ENCODE measurements at regions of chr19 and their contacts with region 1.

Region 1: DNA sequence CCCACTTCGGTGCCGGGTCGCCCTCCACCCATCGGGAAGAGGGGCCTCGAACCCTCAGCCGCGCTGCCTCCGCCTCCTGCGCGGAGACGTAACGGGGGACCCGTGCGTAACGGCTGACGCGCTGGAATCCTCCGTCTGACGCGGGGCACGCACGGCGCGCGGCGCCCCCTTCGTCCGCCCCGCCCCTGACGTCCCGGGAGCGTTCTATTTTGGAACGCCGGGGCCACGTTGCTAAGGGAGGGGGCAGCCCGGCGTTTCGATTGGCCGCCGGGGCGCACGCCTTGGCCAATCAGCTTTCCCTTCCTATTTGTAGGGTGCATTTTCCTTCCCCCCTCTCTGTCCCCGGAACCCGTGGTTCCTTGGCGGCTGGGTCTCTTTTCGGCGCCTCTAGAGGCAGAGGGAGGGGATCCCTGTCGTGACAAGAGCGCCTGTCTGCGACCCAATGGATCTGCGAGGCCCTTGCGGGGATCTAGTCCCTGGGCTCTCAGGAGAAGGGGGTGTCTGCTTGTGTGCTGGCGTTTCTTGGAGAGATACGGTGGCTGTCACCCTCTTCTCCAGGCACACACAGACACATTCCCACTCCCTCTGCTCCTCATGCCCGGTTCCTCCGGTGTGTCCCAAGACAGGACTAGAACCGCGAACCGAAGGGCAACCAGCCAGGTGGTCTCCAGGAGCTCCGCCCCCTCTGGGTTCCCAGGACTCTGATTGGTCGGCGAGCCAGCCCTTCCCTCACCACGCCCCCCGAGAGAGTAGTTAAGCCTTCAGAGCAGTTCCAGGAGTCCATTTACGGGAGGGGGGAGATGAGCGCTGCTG is 1.5 kb downstream of the FOSB start:
- DNase-seq: peak; percentile 97
- H3K4me3 Mint-ChIP-seq: peak overlapping the region; percentile 88
- H3K27ac Mint-ChIP-seq: peak overlapping the region; percentile 91
- H3K4me1 Mint-ChIP-seq: peaks cover 29% of the 10 kb centered on the region
- H3K27me3 Mint-ChIP-seq: peaks cover 25% of the 10 kb centered on the region

Region 2: GRCh38 chr19:45450012-45450333 is 19.4 kb before region 1 on chr19:
- CTCF ChIA-PET with region 1: interaction called, 9 read pairs
- POLR2A ChIA-PET with region 1: interaction called, 25 read pairs
- DNase-seq: peak; percentile 47
- H3K4me3 Mint-ChIP-seq: peak overlapping the region; percentile 91
- H3K27ac Mint-ChIP-seq: peak overlapping the region; percentile 92
- H3K4me1 Mint-ChIP-seq: peaks cover 51% of the 10 kb centered on the region
- H3K27me3 Mint-ChIP-seq: peaks cover 2% of the 10 kb centered on the region

Region 3: DNA sequence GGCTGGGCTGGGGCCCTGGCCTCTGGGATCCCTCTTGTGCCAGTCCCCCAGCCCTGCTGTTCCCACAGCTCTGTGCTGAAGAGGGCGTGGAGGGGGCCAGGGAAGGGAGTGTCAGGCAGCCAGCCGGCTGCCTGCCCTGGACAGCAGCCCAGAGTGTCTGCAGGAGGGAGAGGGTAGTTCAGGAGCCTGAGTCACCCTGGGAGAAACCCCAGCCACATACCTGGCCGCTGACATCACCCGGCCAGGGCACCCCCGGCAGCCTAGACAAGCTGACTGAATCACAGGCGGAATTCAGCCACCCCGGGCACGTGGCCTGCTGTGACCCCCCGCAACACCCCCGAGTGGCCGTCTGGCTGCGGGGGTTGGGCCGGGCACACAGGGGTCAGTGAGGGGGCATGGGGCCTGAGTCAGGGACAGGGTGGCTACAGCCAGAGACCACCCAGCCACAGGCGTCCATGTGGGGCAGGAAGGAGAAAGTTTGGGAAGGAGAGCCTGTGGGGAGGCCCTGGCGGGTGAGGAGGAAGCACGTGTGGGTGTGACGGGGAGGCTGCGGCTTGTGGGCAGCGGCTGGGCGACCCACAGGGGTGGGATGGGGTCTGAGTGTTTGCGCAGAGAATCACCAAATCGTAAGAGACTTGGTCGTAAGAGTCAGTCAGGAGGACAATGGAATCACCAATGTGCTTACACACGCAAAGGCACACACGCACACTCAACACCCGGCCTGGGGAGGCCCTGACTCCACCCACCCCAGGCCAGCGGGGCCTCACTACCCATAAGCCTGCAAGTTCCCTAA is 13.4 kb before region 1 on chr19:
- CTCF ChIA-PET with region 1: interaction called, 8 read pairs
- POLR2A ChIA-PET with region 1: interaction called, 25 read pairs
- DNase-seq: peak; percentile 54
- H3K4me3 Mint-ChIP-seq: no peak overlapping the region
- H3K27ac Mint-ChIP-seq: no peak overlapping the region
- H3K4me1 Mint-ChIP-seq: peaks cover 31% of the 10 kb centered on the region
- H3K27me3 Mint-ChIP-seq: peaks cover 6% of the 10 kb centered on the region

Measured in activated CD4-positive, alpha-beta memory T cell treated with anti-CD3 and anti-CD28 coated beads, Interleukin-2, amount 10 ng/mL, durations not matched to agents 7 days and 5 days (primary cell).